ENCODE measurements at regions of chr15 and their contacts with region 1.

Region 1: DNA sequence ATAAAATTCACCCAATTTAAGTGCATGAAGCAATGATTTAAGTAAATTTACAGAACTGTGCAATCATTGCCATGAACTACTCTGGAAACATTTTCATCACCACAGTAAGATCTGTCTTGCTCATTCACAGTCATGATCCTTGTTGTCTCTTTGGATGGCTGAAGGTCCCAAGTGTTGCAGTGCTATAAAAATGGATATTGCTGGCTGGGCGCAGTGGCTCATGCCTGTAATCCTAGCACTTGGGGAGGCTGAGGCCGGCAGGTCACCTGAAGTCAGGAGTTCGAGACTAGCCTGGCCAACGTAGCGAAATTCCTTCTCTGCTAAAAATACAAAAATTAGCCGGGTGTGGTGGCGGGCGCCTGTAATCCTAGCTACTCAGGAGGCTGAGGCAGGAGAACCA is 17.0 kb downstream of the SNRPN start:
- DNase-seq: no peak
- ATAC-seq: no peak
- H3K4me3 ChIP-seq: no peak overlapping the region
- H3K4me3 Mint-ChIP-seq: no peak overlapping the region
- H3K27ac ChIP-seq: no peak overlapping the region
- H3K27ac Mint-ChIP-seq: no peak overlapping the region
- H3K4me1 ChIP-seq: no peaks in the 10 kb centered on the region
- H3K4me1 Mint-ChIP-seq: no peaks in the 10 kb centered on the region
- H3K27me3 ChIP-seq: no peaks in the 10 kb centered on the region
- H3K27me3 Mint-ChIP-seq: no peaks in the 10 kb centered on the region
- CTCF ChIP-seq: no peak

Region 2: DNA sequence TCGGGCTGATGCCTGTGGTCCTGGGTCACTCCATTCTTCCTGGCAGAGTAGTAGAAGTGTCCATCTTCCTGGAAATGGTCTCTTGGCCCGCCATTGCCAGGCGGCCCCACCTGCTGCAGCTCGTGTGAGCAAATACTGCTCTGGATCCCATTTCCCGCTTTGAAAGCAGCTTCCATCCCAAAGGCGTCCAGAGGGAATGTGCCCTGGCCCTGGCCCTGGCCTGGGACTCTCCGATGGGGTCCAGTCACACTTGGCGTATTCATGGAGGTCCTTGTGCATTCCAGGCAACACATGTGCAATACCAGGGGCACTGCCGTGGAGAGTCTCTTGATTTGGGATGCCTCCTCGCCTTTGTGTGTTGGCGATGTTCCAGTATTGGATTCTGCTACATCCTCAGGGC is 94.1 kb after region 1 on chr15:
- CTCF ChIA-PET with region 1: no interaction called
- POLR2A ChIA-PET with region 1: no interaction called
- intact Hi-C with region 1: loop called in 1 of 2 experiments (anchors 5 kb)
- DNase-seq: no peak
- ATAC-seq: no peak
- H3K4me3 ChIP-seq: no peak overlapping the region
- H3K4me3 Mint-ChIP-seq: no peak overlapping the region
- H3K27ac ChIP-seq: no peak overlapping the region
- H3K27ac Mint-ChIP-seq: no peak overlapping the region
- H3K4me1 ChIP-seq: no peaks in the 10 kb centered on the region
- H3K4me1 Mint-ChIP-seq: no peaks in the 10 kb centered on the region
- H3K27me3 ChIP-seq: no peaks in the 10 kb centered on the region
- H3K27me3 Mint-ChIP-seq: no peaks in the 10 kb centered on the region
- CTCF ChIP-seq: no peak